ENCODE measurements at regions of chr14 and their contacts with region 1.

Region 1: DNA sequence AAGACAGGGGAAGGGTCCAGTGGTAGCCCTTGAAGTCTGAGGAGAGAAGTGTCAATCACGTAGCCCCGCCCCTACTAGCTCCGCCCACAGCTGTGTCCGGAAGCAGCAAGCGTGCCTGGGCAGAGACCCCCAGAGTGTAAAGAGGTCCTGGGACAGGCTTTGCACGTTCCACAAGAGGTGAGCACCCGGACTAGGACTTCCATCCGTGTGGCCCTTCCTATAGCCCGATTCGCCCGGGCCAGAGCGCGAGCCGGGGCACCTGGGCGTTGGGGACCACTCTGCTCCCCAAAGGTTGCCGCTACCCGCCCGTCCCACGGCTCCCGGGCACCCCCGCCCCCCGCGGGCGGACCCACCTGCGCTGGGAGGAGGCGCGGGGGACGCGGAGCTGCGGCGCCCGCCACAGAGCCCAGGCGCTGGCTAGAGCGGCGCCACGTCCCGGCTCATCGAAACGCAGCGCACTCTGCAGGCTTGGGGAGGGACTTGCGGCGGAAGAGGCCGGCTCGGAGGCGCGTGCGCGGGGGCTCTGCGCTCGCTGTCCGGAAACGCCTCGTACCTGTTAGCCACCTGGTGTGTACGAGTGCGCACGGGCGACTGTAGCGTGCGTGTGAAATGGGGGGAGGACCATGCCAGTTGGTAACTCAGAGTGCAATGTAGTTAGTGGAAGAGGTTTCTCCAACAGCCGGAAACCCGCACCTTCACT is at the start of gene RABGGTA:
- DNase-seq: no peak
- H3K4me3 ChIP-seq: peak within 1 kb of the TSS; percentile 91
- H3K27me3 ChIP-seq: no peaks in the 10 kb centered on the region
- CTCF ChIP-seq: peak; percentile 76
- polyA plus RNA-seq, gene RABGGTA: 23.2 and 52.5 TPM in 2 replicates

Region 2: DNA sequence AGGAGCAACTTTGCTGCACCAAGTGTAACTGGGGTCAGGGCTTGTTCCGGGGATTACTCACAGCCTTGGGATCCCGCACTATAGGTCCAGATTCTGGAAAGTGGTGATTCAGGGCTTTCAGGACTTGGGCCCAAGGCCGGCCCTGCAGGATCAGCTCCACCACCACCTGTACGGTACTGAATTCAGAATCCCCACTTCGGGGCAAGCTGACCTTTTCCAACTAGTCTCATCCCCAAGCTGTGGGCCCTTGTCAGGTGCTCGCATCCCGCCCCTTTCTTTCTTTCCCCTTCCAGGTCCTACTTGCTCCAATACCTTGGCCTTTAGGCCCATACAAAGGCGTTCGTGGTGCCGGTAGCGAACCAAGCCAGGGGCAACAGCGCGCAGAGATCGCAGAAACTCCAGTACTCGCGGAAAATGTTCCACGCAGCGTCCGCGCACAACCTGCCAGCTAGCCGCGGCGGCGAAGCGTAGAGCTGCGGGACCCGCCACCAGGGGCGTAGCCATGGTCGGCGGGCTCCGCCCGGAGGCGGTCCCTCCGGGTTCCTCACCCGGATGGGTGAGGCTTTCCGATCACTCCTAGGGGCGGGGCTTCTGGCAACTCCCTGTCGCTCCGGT is 29.3 kb before region 1 on chr14:
- CTCF ChIA-PET with region 1: interaction called, 29 read pairs
- POLR2A ChIA-PET with region 1: no interaction called
- DNase-seq: no peak
- H3K4me3 ChIP-seq: peak overlapping the region; percentile 64
- H3K27me3 ChIP-seq: no peaks in the 10 kb centered on the region
- CTCF ChIP-seq: peak; percentile 70

Region 3: GRCh38 chr14:24251880-24252288 is 19.4 kb before region 1 on chr14:
- CTCF ChIA-PET with region 1: interaction called, 11 read pairs
- POLR2A ChIA-PET with region 1: no interaction called
- DNase-seq: no peak
- H3K4me3 ChIP-seq: no peak overlapping the region
- H3K27me3 ChIP-seq: no peaks in the 10 kb centered on the region
- CTCF ChIP-seq: peak; percentile 15; the same call in 1 of the 2 replicates

Region 4: GRCh38 chr14:24259252-24259995 is 11.9 kb before region 1 on chr14:
- CTCF ChIA-PET with region 1: interaction called, 16 read pairs
- POLR2A ChIA-PET with region 1: no interaction called
- DNase-seq: no peak
- H3K4me3 ChIP-seq: no peak overlapping the region
- H3K27me3 ChIP-seq: no peaks in the 10 kb centered on the region
- CTCF ChIP-seq: no peak

Region 5: DNA sequence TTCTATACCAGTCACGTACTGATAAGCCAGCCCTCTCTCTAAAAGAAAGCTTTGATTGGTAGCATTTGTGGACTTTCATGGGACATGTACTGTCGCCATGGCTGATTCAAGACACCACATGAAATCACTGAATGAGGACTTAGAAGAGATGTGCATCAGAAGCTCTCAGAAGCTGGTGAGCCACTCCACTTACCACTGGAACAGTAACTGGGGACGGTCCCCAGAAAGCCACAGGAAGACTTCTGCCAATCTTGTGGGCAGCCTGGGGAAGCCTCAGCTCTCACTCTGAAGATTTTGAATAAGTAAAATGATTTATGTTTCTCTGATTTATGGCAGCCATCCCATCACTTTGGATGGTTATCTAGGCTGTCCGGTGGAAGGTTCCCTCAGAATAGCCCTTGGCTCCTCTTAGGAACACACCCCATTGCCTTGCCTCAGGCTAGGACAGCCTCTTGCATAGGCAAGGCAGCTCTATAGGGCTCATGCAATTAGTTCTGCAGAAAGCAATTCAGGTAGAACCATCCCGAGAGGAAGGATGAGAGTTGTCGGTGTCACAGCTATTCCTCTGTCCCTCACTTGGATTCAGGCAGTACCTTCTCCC is 18.5 kb after region 1 on chr14:
- CTCF ChIA-PET with region 1: interaction called, 16 read pairs
- POLR2A ChIA-PET with region 1: no interaction called
- DNase-seq: no peak
- H3K4me3 ChIP-seq: no peak overlapping the region
- H3K27me3 ChIP-seq: no peaks in the 10 kb centered on the region
- CTCF ChIP-seq: no peak

Region 6: GRCh38 chr14:24310646-24311604 is 39.6 kb after region 1 on chr14 and contains the start of gene LTB4R:
- CTCF ChIA-PET with region 1: interaction called, 10 read pairs
- POLR2A ChIA-PET with region 1: no interaction called
- DNase-seq: no peak
- H3K4me3 ChIP-seq: peak within 1 kb of the TSS; percentile 25
- H3K27me3 ChIP-seq: no peaks in the 10 kb centered on the region
- CTCF ChIP-seq: peak; percentile 33
- polyA plus RNA-seq, gene LTB4R: 2.5 and 2.6 TPM in 2 replicates

Region 7: DNA sequence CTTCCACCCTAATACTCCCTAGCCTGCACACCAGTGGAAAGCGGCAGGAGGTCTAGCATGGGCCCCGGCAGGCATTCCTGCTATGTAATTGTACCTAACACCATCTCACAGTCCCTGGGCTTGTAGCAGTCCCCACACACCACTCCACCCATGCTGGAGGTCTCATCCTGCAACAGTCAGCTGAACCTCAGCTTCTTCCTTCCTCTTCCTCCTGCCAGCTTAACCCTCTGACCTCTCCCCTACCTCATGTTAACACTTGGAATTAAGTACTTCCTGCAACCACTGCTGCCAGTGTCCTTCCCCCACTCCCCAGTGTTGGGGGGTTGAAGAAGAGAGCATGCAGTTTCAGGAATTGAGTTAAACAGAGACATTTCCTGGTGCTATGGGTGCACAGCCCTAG is 56.0 kb after region 1 on chr14:
- CTCF ChIA-PET with region 1: no interaction called
- POLR2A ChIA-PET with region 1: no interaction called
- DNase-seq: no peak
- H3K4me3 ChIP-seq: no peak overlapping the region
- H3K27me3 ChIP-seq: peaks cover 4% of the 10 kb centered on the region; the same call in 1 of the 2 replicates
- CTCF ChIP-seq: no peak